ENCODE measurements at regions of chr15 and their contacts with region 1.

Region 1: GRCh38 chr15:99202180-99202552 is 47.2 kb downstream of the TTC23 start:
- DNase-seq: no peak
- H3K4me3 ChIP-seq: no peak overlapping the region
- H3K27ac ChIP-seq: no peak overlapping the region
- H3K4me1 ChIP-seq: no peaks in the 10 kb centered on the region
- H3K27me3 ChIP-seq: no peaks in the 10 kb centered on the region
- CTCF ChIP-seq: no peak

Region 2: DNA sequence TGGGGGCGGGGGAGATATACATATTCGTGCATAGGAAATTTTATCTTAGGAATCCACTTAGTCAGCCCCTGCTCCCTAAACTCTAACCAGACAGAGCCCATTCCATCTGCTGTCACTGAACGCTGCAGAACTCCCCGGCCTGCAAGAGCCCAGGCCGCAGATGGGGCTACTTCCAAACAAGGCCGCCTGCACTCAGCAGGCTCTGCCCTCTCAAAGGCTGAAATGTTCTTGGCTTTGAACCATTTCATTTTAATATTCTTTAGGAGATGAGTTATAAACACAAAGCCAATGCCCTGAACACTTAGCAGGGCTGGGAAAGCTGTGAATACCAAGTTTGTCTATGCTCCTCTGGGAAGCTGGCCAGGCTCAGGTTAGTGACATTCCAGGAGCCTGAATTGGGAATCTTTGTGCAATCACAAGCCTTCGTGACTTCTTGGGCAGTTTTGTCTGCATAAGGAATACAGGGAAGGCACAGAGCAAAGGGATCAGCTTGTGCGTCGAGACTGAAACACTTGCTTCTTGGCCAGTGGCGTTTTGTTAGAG is 32.3 kb before region 1 on chr15:
- CTCF ChIA-PET with region 1: no interaction called
- dilution Hi-C with region 1: loop called (anchors 5 kb)
- in situ Hi-C with region 1: no loop called
- intact Hi-C with region 1: no loop called
- DNase-seq: no peak
- H3K4me3 ChIP-seq: no peak overlapping the region
- H3K27ac ChIP-seq: no peak overlapping the region
- H3K4me1 ChIP-seq: no peaks in the 10 kb centered on the region
- H3K27me3 ChIP-seq: no peaks in the 10 kb centered on the region
- CTCF ChIP-seq: no peak

Measured in mammary epithelial cell (primary cell).